ENCODE measurements at regions of chr1 and their contacts with region 1.

Region 1: GRCh38 chr1:154974063-154974807 is at the start of gene CKS1B:
- DNase-seq: peak; percentile 81
- H3K4me3 ChIP-seq: peak within 1 kb of the TSS; percentile 67 to 79
- H3K27ac ChIP-seq: peak within 1 kb of the TSS; percentile 99 to 100
- H3K4me1 ChIP-seq: peaks cover 27 to 53% of the 10 kb centered on the region in 2 experiments
- H3K27me3 ChIP-seq: no peaks in the 10 kb centered on the region
- CTCF ChIP-seq: no peak
- EP300 ChIP-seq: no peak
- RAD21 ChIP-seq: no peak
- polyA plus RNA-seq, gene CKS1B: 256 and 308 TPM in 2 replicates

Region 2: GRCh38 chr1:154695985-154696384 is 278.2 kb before region 1 on chr1:
- CTCF ChIA-PET with region 1: no interaction called
- POLR2A ChIA-PET with region 1: no interaction called
- DNase-seq: peak; percentile 38
- H3K4me3 ChIP-seq: no peak overlapping the region
- H3K27ac ChIP-seq: no peak overlapping the region
- H3K4me1 ChIP-seq: no peaks in the 10 kb centered on the region
- H3K27me3 ChIP-seq: no peaks in the 10 kb centered on the region; the same call in 1 of the 2 replicates
- CTCF ChIP-seq: peak; percentile 32; the same call in 1 of the 2 replicates
- EP300 ChIP-seq: no peak
- RAD21 ChIP-seq: peak; percentile 61

Region 3: GRCh38 chr1:154896771-154897391 is 77.4 kb before region 1 on chr1:
- CTCF ChIA-PET with region 1: no interaction called
- POLR2A ChIA-PET with region 1: no interaction called
- DNase-seq: no peak
- H3K4me3 ChIP-seq: no peak overlapping the region
- H3K27ac ChIP-seq: no peak overlapping the region
- H3K4me1 ChIP-seq: peaks cover 0 to 9% of the 10 kb centered on the region in 2 experiments; a peak in 2 of 4 replicates
- H3K27me3 ChIP-seq: peaks cover 12% of the 10 kb centered on the region
- CTCF ChIP-seq: no peak
- EP300 ChIP-seq: no peak
- RAD21 ChIP-seq: no peak

Region 4: GRCh38 chr1:154955718-154956543 is 18.3 kb before region 1 on chr1 and contains the start of gene PBXIP1:
- CTCF ChIA-PET with region 1: interaction called, 36 read pairs
- POLR2A ChIA-PET with region 1: interaction called, 17 read pairs
- DNase-seq: peak; percentile 94
- H3K4me3 ChIP-seq: peak within 1 kb of the TSS; percentile 74 to 79
- H3K27ac ChIP-seq: peak within 1 kb of the TSS; percentile 90 to 91
- H3K4me1 ChIP-seq: peaks cover 0 to 51% of the 10 kb centered on the region in 2 experiments; a peak in 3 of 4 replicates
- H3K27me3 ChIP-seq: no peaks in the 10 kb centered on the region
- CTCF ChIP-seq: peak; percentile 53
- EP300 ChIP-seq: no peak
- RAD21 ChIP-seq: peak; percentile 55
- polyA plus RNA-seq, gene PBXIP1: 55.9 and 64.3 TPM in 2 replicates

Region 5: DNA sequence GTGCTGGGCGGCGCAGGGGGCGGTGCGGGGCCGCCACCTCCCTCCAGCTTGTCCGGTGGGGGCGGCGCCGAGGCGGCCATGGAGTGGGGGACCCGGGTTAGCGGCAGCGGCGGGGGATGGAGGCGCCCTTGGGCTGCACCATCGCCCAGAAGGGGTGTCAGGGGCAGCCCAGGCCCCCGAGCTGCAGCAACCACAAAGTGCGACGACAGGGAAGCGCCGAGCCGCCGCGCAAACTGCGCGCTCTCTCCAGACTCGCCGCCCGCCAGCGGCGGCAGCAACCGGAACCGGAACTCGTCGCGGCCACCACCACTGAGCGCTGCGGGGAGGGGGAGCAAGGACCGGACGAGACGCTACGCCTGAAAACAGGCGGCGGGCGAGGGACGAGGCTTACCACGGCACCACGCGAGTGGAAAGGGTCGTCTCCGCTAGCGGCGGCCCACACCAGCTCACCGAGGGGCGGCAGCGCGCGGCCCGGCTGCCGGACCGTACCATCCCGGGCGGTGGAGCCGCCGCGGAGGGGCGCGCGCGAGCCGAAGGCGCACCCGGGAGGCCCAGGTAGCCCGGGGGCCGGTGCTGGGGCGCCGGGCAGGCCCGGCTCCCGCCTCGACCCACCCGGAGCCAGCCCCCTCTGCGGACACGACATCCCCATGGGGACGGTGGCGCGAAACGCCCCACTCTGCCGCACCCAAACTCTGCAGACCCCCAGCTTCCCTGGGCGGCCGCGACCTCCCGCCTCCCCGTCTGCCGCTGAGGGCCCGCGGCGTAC is 12.6 kb before region 1 on chr1 and contains the start of gene PYGO2:
- CTCF ChIA-PET with region 1: interaction called, 36 read pairs
- POLR2A ChIA-PET with region 1: interaction called, 17 read pairs
- DNase-seq: peak; percentile 93
- H3K4me3 ChIP-seq: peak within 1 kb of the TSS; percentile 72 to 73
- H3K27ac ChIP-seq: peak within 1 kb of the TSS; percentile 83 to 98
- H3K4me1 ChIP-seq: peaks cover 4 to 36% of the 10 kb centered on the region in 2 experiments; a peak in 3 of 4 replicates
- H3K27me3 ChIP-seq: no peaks in the 10 kb centered on the region
- CTCF ChIP-seq: peak; percentile 69
- EP300 ChIP-seq: 0 out of 4 replicates have a peak, but pooled peaks of 1 of the 2 experiments have one; percentile 26
- RAD21 ChIP-seq: peak; percentile 46
- polyA plus RNA-seq, gene PYGO2: 23.3 and 28.2 TPM in 2 replicates

Region 6: GRCh38 chr1:154992721-154993571 is 18.7 kb after region 1 on chr1:
- CTCF ChIA-PET with region 1: interaction called, 640 read pairs
- POLR2A ChIA-PET with region 1: interaction called, 16 read pairs
- DNase-seq: no peak
- H3K4me3 ChIP-seq: no peak overlapping the region
- H3K27ac ChIP-seq: peak overlapping the region; percentile 14 to 43; a peak in 2 of 4 replicates
- H3K4me1 ChIP-seq: peaks cover 3 to 29% of the 10 kb centered on the region in 2 experiments; a peak in 3 of 4 replicates
- H3K27me3 ChIP-seq: no peaks in the 10 kb centered on the region
- CTCF ChIP-seq: peak; percentile 30
- EP300 ChIP-seq: no peak
- RAD21 ChIP-seq: peak; percentile 31